ENCODE measurements at regions of chr9 and their contacts with region 1.

Region 1: GRCh38 chr9:91734371-91734981 is 215.6 kb downstream of the ROR2 start:
- DNase-seq: peak; percentile 81
- CTCF ChIP-seq: peak; percentile 95

Region 2: DNA sequence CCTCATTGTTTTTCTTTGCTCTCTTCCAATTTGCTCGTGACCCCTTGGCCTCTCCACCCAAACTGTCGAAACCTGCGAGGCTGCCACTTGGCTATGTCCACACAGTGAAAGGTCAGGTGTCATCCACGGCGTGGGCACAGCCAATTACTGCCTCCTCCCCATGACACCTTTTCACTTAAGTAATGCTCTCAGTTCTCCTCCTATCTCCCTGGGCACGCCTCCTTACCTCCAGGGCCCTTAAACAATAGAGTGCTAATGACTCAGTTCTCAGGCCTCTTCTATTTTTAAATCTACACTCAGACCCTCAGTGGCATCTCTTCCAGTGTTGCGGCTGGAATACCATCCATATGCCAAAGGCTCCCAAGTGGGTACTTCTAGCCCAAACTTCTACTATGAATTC is 41.2 kb before region 1 on chr9:
- CTCF ChIA-PET with region 1: no interaction called
- POLR2A ChIA-PET with region 1: no interaction called
- DNase-seq: no peak
- CTCF ChIP-seq: no peak

Region 3: GRCh38 chr9:91711755-91712601 is 22.5 kb before region 1 on chr9:
- CTCF ChIA-PET with region 1: interaction called, 32 read pairs
- POLR2A ChIA-PET with region 1: no interaction called
- DNase-seq: peak; percentile 87
- CTCF ChIP-seq: no peak

Region 4: DNA sequence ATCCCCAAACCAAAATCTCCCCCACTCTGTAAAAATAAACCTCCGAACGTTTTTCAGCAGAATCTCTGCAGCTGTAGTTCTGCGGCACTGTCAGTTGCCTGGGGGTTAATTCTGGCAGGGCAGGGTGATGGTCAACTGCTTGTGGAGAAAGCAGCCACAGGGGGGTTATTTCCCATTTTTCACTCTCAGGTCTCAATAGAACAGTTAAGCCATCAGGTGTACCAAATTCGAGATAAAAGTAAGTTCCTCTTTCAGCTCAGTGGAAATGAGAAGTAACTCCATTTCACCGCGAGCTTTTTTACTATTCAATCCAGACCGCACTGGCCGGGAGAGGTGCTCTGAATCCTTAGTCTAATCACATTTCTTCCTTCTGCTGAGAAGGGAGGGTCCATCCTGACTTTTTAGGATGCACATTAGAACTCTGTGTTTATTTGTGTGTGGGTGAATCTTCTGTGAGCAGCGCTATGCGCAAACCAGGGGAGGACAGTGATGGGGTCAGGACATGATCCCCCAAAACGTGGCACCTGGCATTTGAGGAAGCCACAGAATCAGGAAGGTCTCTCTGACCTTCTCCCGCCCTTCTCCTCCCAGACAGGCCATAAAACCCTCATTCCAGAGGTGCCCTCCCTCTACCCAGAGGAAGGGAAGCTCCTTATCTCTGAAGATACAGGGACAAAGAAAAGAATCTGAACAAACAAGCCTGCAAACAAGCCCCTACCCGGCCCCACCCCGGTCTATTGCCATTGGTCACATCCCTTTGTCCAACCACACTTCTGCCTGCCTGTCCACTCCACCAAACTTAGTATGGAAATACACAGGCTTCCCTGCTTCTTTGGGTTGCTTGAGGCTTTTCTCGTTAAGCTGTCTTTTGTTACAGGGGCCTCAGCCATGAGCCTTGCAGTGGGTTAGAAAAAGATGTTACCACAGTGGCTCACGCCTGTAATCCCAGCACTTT is 13.4 kb before region 1 on chr9:
- CTCF ChIA-PET with region 1: interaction called, 32 read pairs
- POLR2A ChIA-PET with region 1: no interaction called
- DNase-seq: peak; percentile 63
- CTCF ChIP-seq: no peak

Measured in GM10248 (cell line).